Activated B cell treated with CpG ODN at 0.5 μM for 24 hours (primary cell): ENCODE measurements at regions of chr4 and their contacts with region 1.

Region 1: DNA sequence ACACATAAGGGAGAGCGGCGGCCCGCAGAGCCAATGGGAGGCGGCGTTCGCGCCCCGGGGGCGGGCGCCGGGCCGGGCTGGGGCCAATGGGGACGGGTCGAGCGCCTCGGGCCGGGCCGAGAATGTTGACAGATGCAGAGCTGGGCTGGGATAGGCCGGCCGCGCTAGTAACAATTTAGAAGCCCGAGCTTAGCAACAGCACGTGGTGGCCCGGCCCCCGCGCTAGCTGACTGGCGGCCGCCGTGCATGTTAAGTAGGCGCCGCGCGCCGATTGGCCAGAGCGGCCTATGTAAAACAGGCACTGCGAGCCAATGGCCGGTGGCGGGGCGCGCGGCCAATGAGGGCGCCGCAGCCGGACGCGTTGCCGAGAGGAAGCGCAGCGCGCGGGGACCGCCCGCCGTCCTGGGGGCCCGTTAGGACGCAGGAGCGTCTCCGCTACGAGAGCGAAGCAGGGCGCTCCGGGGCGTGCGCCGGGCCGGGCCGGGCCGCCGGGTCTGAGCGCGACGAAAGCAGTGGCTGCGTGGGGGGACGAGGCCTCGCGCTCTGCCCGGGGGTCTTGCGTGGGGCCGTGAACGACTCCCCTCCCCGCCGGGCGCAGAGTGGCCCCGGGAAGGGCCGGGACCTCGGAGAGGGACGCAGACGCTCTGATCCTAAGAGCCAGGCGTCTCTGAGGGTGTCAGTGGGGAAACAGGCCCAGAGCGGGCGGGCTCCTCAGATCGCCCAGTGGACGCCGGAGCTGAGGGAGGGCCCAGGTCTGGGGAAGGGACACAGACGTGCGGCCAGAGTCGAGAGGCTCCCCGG is 434 bp upstream of the MXD4 start:
- DNase-seq: peak; percentile 95
- ATAC-seq: peak; percentile 89
- H3K4me3 Mint-ChIP-seq: peak overlapping the region; percentile 78
- H3K27ac Mint-ChIP-seq: peak overlapping the region; percentile 85
- H3K4me1 Mint-ChIP-seq: peaks cover 18% of the 10 kb centered on the region
- H3K27me3 Mint-ChIP-seq: no peaks in the 10 kb centered on the region
- CTCF ChIP-seq: no peak

Region 2: DNA sequence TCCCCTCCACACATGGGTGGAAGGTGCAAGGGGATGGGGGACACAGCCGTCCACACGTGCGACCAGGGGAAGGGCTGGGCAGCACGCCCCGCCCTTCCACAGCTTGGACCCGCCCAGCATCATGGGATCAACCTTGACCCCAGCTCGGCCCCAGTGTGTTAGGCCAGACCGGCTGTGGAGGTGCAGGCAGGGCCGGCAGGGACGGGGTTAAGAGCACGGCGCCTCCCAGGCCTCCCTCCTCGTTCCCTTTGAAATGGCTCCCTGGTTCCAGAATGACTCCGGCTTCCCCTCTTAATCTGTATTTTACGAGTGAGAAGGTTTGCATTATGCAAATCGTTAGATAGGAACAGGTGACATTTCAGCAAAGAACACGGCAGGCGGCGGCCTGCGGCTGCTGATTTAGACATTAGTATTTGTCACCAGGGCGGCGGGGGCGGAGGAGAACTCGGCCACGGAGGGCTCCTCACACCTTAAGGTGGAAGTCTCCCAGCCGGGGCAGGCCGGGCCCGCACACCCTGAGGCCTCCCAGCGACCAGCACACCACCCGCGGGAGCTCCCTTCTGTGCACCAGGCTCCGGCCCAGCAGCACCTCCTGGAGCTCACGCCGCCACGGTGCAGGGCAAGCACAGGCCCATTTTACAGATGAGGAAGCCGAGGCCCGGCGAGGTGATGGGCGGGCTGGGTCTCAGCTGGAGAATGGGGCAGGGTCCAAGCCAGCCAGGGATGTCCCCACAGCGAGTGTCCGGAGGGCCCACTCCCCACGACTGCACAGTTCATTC is 694.4 kb before region 1 on chr4:
- CTCF ChIA-PET with region 1: no interaction called
- POLR2A ChIA-PET with region 1: no interaction called
- intact Hi-C with region 1: no loop called
- DNase-seq: no peak
- ATAC-seq: peak; percentile 43
- H3K4me3 Mint-ChIP-seq: no peak overlapping the region
- H3K27ac Mint-ChIP-seq: no peak overlapping the region
- H3K4me1 Mint-ChIP-seq: peaks cover 2% of the 10 kb centered on the region
- H3K27me3 Mint-ChIP-seq: peaks cover 12% of the 10 kb centered on the region
- CTCF ChIP-seq: no peak

Region 3: GRCh38 chr4:2008875-2009703 is 253.3 kb before region 1 on chr4 and contains the start of gene NELFA:
- CTCF ChIA-PET with region 1: no interaction called
- POLR2A ChIA-PET with region 1: interaction called, 3 read pairs
- intact Hi-C with region 1: loop called (anchors 5 kb)
- DNase-seq: peak; percentile 93
- ATAC-seq: peak; percentile 80
- H3K4me3 Mint-ChIP-seq: peak within 1 kb of the TSS; percentile 90
- H3K27ac Mint-ChIP-seq: peak within 1 kb of the TSS; percentile 91
- H3K4me1 Mint-ChIP-seq: peaks cover 32% of the 10 kb centered on the region
- H3K27me3 Mint-ChIP-seq: peaks cover 4% of the 10 kb centered on the region
- CTCF ChIP-seq: no peak
- total RNA-seq, gene NELFA: 44.7 and 49.9 TPM in 2 replicates

Region 4: DNA sequence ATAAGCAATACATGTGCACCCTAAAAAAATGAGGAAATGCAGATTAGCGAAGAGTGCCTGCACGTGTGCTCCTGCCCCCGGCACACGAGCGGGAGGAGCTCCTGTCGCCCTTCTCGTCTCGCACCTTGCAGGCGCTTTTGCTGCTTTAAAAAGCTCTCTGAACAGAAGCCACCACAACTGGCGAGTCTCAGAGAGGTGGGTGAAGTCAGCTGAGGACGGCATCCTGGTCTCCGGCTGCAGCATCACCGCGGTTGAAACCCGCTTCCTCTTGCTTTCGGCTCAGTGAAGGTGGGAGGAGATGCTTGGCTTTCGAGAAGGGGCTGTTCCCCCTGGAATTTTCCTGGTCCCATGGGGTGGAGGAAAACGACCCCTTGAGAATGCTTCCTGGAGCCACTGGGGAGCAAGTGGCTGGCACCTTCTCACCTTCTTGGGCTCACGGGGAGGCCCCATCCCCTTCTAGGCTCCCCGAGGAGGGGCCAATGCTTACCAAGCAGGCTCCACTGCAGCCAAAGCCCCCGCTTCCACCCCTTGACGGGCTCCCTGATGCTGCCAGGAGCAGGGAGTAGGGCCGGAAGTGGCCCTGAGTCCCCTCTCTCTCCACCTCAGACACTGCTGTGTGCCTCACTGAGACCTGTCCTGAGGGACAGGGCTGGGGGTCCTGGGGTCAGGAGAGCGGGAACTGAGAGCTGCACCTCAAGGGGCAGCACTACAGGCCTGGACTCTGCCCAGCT is 28.8 kb after region 1 on chr4:
- CTCF ChIA-PET with region 1: no interaction called
- POLR2A ChIA-PET with region 1: interaction called, 21 read pairs
- intact Hi-C with region 1: loop called (anchors 5 kb)
- DNase-seq: peak; percentile 38
- ATAC-seq: peak; percentile 74
- H3K4me3 Mint-ChIP-seq: peak overlapping the region; percentile 66
- H3K27ac Mint-ChIP-seq: peak overlapping the region; percentile 70
- H3K4me1 Mint-ChIP-seq: peaks cover 19% of the 10 kb centered on the region
- H3K27me3 Mint-ChIP-seq: no peaks in the 10 kb centered on the region
- CTCF ChIP-seq: no peak

Region 5: DNA sequence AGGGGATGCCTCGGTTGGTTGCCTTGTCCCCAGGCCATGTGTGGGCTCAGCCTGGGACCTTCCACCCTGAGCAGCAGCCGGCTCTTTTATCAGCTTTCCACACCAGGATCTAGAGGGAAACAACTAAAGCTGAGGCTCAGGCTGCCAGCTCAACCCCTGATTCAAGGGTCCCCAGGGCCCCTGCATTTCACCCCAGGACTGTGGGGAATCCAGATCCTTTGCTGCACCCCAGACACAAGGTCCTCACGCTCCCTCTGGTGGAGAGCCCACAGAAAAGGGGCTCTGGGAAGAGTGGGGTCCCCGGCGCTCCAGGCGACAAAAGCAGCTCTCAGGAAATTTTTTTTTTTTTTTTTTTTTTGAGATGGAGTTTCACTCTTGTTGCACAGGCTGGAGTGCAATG is 91.8 kb after region 1 on chr4:
- CTCF ChIA-PET with region 1: no interaction called
- POLR2A ChIA-PET with region 1: interaction called, 7 read pairs
- intact Hi-C with region 1: loop called (anchors 1 kb)
- DNase-seq: no peak
- ATAC-seq: peak; percentile 35
- H3K4me3 Mint-ChIP-seq: no peak overlapping the region
- H3K27ac Mint-ChIP-seq: peak overlapping the region; percentile 56
- H3K4me1 Mint-ChIP-seq: peaks cover 12% of the 10 kb centered on the region
- H3K27me3 Mint-ChIP-seq: no peaks in the 10 kb centered on the region
- CTCF ChIP-seq: no peak

Region 6: DNA sequence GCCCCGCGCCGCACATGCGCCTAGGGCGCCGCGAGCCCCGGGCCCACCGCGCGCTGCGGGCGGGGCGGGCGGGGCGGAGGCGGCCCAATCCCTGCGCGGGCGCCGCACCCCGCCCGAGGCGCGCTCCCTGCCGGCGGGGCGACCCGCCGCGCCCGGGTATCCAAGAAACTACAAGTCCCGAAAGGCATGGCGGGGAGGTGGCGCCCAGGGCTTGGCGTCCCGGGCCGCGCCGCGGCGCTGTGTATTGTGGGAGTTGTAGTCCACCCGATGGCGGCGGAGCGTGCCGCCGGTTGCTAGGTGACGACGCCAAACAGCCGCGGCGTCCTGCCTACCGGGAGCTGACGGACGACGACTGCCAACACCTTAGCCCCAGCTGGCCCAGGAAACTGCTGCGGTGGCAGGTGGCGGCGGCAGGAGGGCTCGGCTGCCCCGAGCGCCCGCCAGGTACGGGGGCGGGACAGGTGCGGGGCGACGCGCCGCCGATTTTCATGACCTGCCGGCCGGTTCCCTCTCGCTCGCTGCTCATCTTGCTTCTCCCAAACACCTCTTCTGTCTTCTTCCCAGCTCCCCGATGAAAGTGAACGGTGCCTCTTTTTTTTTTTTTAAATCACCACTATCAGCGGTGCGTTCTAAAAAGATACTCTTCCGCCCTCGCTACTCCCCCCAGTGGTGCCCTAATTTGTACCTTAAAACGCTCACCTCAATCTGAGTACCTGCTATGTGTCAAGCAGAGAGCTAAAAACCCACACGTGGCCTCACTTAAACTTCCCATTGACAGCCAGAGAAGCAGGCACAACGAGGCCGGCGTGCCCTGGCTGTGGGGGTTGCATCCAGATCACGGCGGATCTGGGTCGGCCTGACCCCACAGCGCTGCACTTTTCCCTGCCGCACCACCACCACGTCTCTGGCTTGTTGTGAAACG is 156.6 kb after region 1 on chr4 and contains the start of gene CFAP99:
- CTCF ChIA-PET with region 1: no interaction called
- POLR2A ChIA-PET with region 1: interaction called, 13 read pairs
- intact Hi-C with region 1: loop called (anchors 1 kb)
- DNase-seq: peak; percentile 93
- ATAC-seq: peak; percentile 91
- H3K4me3 Mint-ChIP-seq: peak within 1 kb of the TSS; percentile 91
- H3K27ac Mint-ChIP-seq: peak within 1 kb of the TSS; percentile 90
- H3K4me1 Mint-ChIP-seq: peaks cover 39% of the 10 kb centered on the region
- H3K27me3 Mint-ChIP-seq: peaks cover 28% of the 10 kb centered on the region
- CTCF ChIP-seq: no peak
- total RNA-seq, gene CFAP99: not detected in 2 replicates

Region 7: DNA sequence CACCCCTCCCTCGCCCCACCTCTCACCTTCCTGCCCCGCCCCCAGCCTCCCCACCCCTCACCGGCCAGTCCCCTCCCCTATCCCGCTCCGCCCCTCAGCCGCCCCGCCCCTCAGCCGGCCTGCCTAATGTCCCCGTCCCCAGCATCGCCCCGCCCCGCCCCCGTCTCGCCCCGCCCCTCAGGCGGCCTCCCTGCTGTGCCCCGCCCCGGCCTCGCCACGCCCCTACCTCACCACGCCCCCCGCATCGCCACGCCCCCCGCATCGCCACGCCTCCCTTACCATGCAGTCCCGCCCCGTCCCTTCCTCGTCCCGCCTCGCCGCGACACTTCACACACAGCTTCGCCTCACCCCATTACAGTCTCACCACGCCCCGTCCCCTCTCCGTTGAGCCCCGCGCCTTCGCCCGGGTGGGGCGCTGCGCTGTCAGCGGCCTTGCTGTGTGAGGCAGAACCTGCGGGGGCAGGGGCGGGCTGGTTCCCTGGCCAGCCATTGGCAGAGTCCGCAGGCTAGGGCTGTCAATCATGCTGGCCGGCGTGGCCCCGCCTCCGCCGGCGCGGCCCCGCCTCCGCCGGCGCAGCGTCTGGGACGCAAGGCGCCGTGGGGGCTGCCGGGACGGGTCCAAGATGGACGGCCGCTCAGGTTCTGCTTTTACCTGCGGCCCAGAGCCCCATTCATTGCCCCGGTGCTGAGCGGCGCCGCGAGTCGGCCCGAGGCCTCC is 811.9 kb after region 1 on chr4 and contains the starts of genes HTT and HTT-AS:
- CTCF ChIA-PET with region 1: no interaction called
- POLR2A ChIA-PET with region 1: no interaction called
- intact Hi-C with region 1: loop called (anchors 1 kb)
- DNase-seq: peak; percentile 93
- ATAC-seq: peak; percentile 77
- H3K4me3 Mint-ChIP-seq: peak within 1 kb of the TSS; percentile 92
- H3K27ac Mint-ChIP-seq: peak within 1 kb of the TSS; percentile 95
- H3K4me1 Mint-ChIP-seq: peaks cover 39% of the 10 kb centered on the region
- H3K27me3 Mint-ChIP-seq: no peaks in the 10 kb centered on the region
- CTCF ChIP-seq: no peak
- total RNA-seq, gene HTT: 239 and 242 TPM in 2 replicates
- total RNA-seq, gene HTT-AS: not detected in 2 replicates